ENCODE measurements at regions of chr15 and their contacts with region 1.

Region 1: GRCh38 chr15:90086868-90087268 is 15.4 kb downstream of the IDH2 start:
- DNase-seq: peak; percentile 76
- H3K4me3 Mint-ChIP-seq: no peak overlapping the region
- H3K27ac Mint-ChIP-seq: no peak overlapping the region
- H3K4me1 Mint-ChIP-seq: no peaks in the 10 kb centered on the region
- H3K27me3 Mint-ChIP-seq: no peaks in the 10 kb centered on the region
- CTCF ChIP-seq: peak; percentile 83

Region 2: GRCh38 chr15:89740137-89740536 is 346.7 kb before region 1 on chr15:
- CTCF ChIA-PET with region 1: interaction called, 3 read pairs
- POLR2A ChIA-PET with region 1: no interaction called
- intact Hi-C with region 1: loop called (anchors 2 kb)
- DNase-seq: peak; percentile 78
- H3K4me3 Mint-ChIP-seq: no peak overlapping the region
- H3K27ac Mint-ChIP-seq: no peak overlapping the region
- H3K4me1 Mint-ChIP-seq: no peaks in the 10 kb centered on the region
- H3K27me3 Mint-ChIP-seq: peaks cover 19% of the 10 kb centered on the region
- CTCF ChIP-seq: peak; percentile 89

Region 3: GRCh38 chr15:89912674-89913396 is 174.0 kb before region 1 on chr15 and contains the start of gene ARPIN:
- CTCF ChIA-PET with region 1: interaction called, 5 read pairs
- POLR2A ChIA-PET with region 1: interaction called, 12 read pairs
- intact Hi-C with region 1: no loop called
- DNase-seq: peak; percentile 52
- H3K4me3 Mint-ChIP-seq: peak within 1 kb of the TSS; percentile 76
- H3K27ac Mint-ChIP-seq: no peak within 1 kb of the TSS
- H3K4me1 Mint-ChIP-seq: peaks cover 27% of the 10 kb centered on the region
- H3K27me3 Mint-ChIP-seq: no peaks in the 10 kb centered on the region
- CTCF ChIP-seq: no peak
- total RNA-seq, gene ARPIN: 7.1 and 9.9 TPM in 2 replicates

Region 4: GRCh38 chr15:90114451-90114901 is 27.6 kb after region 1 on chr15:
- CTCF ChIA-PET with region 1: no interaction called
- POLR2A ChIA-PET with region 1: no interaction called
- intact Hi-C with region 1: no loop called
- DNase-seq: no peak
- H3K4me3 Mint-ChIP-seq: no peak overlapping the region
- H3K27ac Mint-ChIP-seq: no peak overlapping the region
- H3K4me1 Mint-ChIP-seq: no peaks in the 10 kb centered on the region
- H3K27me3 Mint-ChIP-seq: peaks cover 7% of the 10 kb centered on the region
- CTCF ChIP-seq: no peak